H1 (cell line): ENCODE measurements at regions of chr10 and their contacts with region 1.

Region 1: GRCh38 chr10:120423431-120424197 is 33.4 kb upstream of the PLPP4 start:
- DNase-seq: peak; percentile 2 to 79
- H3K4me3 ChIP-seq: no peak overlapping the region
- H3K27ac ChIP-seq: no peak overlapping the region
- H3K4me1 ChIP-seq: no peaks in the 10 kb centered on the region
- H3K27me3 ChIP-seq: no peaks in the 10 kb centered on the region
- CTCF ChIP-seq: peak; percentile 77 to 93 (median 83)
- EP300 ChIP-seq: no peak
- POLR2A ChIP-seq: no peak
- RAD21 ChIP-seq: peak; percentile 87 to 92

Region 2: GRCh38 chr10:120409816-120410215 is 13.8 kb before region 1 on chr10:
- CTCF ChIA-PET with region 1: interaction called, 21 read pairs
- POLR2A ChIA-PET with region 1: no interaction called
- DNase-seq: no peak
- H3K4me3 ChIP-seq: no peak overlapping the region
- H3K27ac ChIP-seq: no peak overlapping the region
- H3K4me1 ChIP-seq: no peaks in the 10 kb centered on the region
- H3K27me3 ChIP-seq: no peaks in the 10 kb centered on the region
- CTCF ChIP-seq: no peak
- EP300 ChIP-seq: no peak
- POLR2A ChIP-seq: no peak
- RAD21 ChIP-seq: no peak

Region 3: GRCh38 chr10:120517881-120518484 is 94.4 kb after region 1 on chr10:
- CTCF ChIA-PET with region 1: interaction called, 11 read pairs
- POLR2A ChIA-PET with region 1: no interaction called
- DNase-seq: no peak
- H3K4me3 ChIP-seq: no peak overlapping the region
- H3K27ac ChIP-seq: no peak overlapping the region
- H3K4me1 ChIP-seq: no peaks in the 10 kb centered on the region
- H3K27me3 ChIP-seq: no peaks in the 10 kb centered on the region
- CTCF ChIP-seq: no peak
- EP300 ChIP-seq: no peak
- POLR2A ChIP-seq: no peak
- RAD21 ChIP-seq: no peak

Region 4: DNA sequence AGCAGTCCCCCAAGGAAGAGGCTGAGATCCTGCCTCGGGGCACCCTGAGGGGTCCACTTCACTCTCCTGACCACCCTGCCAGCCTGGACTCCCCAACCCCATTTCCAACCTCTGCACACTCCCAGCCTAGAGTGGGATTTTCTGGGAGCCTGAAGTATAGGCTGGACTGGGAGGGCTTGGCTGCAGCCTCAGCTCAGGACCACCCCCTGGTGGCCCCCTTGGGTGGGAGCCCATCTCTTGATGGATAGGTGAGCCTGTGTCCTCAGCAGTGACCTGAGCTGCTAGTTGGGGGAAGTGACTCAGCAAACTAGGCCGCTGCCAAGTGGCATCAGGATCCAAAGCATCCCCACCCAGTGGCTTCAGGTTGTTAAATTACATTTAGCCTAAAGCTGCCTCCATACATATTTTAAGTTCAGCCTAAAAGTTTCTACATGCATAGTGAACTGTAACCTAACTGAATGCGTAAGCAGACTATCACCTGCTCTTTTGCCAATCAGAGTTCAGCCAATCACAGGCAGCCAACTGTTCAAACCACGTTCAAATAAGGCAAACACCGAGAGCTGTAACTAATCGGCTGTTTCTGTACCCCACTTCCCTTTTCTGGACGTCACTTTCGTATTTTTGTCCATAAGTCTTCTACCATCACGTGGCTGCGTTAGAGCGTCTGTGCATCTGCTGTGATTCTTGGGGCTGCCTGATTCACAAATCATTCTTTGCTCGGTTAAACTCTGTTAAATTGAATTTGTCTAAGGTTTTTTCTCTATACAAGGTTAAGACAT is 177.4 kb after region 1 on chr10:
- CTCF ChIA-PET with region 1: interaction called, 37 read pairs
- POLR2A ChIA-PET with region 1: no interaction called
- DNase-seq: peak; percentile 39 to 63
- H3K4me3 ChIP-seq: no peak overlapping the region
- H3K27ac ChIP-seq: no peak overlapping the region
- H3K4me1 ChIP-seq: peaks cover 2 to 13% (median 6%) of the 10 kb centered on the region in 4 experiments; a peak in 5 of 7 replicates
- H3K27me3 ChIP-seq: no peaks in the 10 kb centered on the region
- CTCF ChIP-seq: peak; percentile 59 to 70 (median 61)
- EP300 ChIP-seq: no peak
- POLR2A ChIP-seq: no peak
- RAD21 ChIP-seq: peak; percentile 75 to 81

Region 5: GRCh38 chr10:120646738-120647456 is 223.3 kb after region 1 on chr10:
- CTCF ChIA-PET with region 1: interaction called, 19 read pairs
- POLR2A ChIA-PET with region 1: no interaction called
- DNase-seq: no peak
- H3K4me3 ChIP-seq: no peak overlapping the region
- H3K27ac ChIP-seq: no peak overlapping the region
- H3K4me1 ChIP-seq: peaks cover 5 to 18% (median 12%) of the 10 kb centered on the region in 4 experiments
- H3K27me3 ChIP-seq: peaks cover 0 to 18% (median 14%) of the 10 kb centered on the region in 4 experiments; a peak in 5 of 7 replicates
- CTCF ChIP-seq: peak; percentile 23 to 38 (median 38); a peak in 3 of 4 replicates
- EP300 ChIP-seq: no peak
- POLR2A ChIP-seq: no peak
- RAD21 ChIP-seq: peak; percentile 36 to 57